HEK293 (cell line): ENCODE measurements at regions of chr19 and their contacts with region 1.

Region 1: DNA sequence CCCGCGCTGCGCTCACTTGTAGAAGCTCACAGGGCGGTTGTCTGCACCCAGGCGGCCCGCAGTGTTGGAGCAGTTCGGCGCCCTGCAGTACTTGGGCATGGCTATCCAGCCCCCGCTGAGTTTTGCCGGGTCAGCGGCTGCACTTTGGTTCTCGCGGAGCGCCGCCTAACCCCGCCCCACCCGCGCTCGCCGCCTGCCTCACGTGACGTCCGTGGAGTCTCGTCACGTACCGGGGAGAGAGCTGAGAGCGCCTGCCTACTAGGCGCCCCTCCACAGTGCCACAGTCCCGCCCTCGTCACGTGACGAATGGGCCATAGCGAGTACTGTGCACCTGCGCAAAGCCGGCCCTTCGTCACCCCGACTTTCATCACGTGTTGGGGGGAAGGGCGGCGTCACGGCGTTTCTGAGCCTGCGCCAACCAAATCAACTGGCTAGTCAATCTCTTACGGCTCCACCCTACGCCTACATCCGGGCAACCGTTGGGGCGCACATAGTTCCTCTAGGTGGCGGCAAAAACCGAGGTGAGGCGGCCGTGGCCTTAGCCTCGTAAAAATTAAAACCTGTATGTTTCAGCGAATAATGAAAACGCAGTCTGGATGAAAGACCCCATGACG is at the start of gene THAP8:
- H3K4me3 ChIP-seq: peak within 1 kb of the TSS; percentile 58
- H3K27ac ChIP-seq: peak within 1 kb of the TSS; percentile 93
- H3K4me1 ChIP-seq: peaks cover 38% of the 10 kb centered on the region
- CTCF ChIP-seq: peak; percentile 92

Region 2: DNA sequence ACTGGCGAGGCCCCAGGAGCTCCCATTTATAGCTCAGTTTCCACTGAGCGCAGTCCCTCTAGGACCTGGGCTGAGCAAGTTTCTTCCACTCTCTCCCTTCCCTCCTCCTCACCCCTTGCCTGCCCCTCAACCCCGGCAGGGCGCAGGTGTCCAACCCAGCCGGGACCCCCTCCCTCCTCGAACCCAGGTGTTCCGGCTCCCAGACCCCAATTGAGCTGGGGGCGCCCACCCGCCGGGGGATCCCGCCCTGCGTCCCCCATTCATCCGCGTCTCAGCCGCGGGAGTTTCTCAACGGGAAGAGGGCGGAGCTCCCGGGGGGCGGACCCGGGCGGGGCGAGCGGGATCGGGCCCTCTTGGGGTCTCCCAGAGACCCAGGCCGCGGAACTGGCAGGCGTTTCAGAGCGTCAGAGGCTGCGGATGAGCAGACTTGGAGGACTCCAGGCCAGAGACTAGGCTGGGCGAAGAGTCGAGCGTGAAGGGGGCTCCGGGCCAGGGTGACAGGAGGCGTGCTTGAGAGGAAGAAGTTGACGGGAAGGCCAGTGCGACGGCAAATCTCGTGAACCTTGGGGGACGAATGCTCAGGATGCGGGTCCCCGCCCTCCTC is 197.6 kb before region 1 on chr19 and contains the start of gene KIRREL2:
- CTCF ChIA-PET with region 1: no interaction called
- POLR2A ChIA-PET with region 1: interaction called, 11 read pairs
- H3K4me3 ChIP-seq: no peak within 1 kb of the TSS
- H3K27ac ChIP-seq: no peak within 1 kb of the TSS
- H3K4me1 ChIP-seq: no peaks in the 10 kb centered on the region
- CTCF ChIP-seq: no peak

Region 3: DNA sequence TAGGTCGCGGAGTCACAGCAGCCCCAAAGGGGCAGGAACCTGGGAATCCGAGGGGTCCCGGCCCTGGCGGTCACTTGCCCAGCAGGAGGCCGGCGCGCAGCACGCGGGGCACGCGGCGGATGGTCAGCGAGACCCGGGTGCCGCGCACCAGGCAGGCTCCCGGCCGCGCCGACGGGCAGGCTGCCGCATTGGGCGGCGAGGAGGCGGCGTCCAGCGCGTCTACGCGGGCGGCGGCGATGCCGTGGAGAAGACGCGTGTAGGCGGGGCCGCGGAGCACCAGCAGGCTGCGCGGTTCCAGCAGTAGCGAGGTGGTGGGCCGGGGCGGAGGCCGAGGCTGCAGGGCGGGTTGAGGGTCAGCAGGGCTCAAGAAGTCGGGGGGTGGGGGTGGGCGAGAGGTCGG is 45.0 kb before region 1 on chr19:
- CTCF ChIA-PET with region 1: interaction called, 6 read pairs
- POLR2A ChIA-PET with region 1: interaction called, 26 read pairs
- H3K4me3 ChIP-seq: no peak overlapping the region
- H3K27ac ChIP-seq: no peak overlapping the region
- H3K4me1 ChIP-seq: peaks cover 12% of the 10 kb centered on the region
- CTCF ChIP-seq: no peak

Region 4: GRCh38 chr19:36041831-36042230 is 12.4 kb before region 1 on chr19:
- CTCF ChIA-PET with region 1: interaction called, 6 read pairs
- POLR2A ChIA-PET with region 1: interaction called, 19 read pairs
- H3K4me3 ChIP-seq: no peak overlapping the region
- H3K27ac ChIP-seq: no peak overlapping the region
- H3K4me1 ChIP-seq: peaks cover 2% of the 10 kb centered on the region; the same call in 1 of the 2 replicates
- CTCF ChIP-seq: no peak

Region 5: DNA sequence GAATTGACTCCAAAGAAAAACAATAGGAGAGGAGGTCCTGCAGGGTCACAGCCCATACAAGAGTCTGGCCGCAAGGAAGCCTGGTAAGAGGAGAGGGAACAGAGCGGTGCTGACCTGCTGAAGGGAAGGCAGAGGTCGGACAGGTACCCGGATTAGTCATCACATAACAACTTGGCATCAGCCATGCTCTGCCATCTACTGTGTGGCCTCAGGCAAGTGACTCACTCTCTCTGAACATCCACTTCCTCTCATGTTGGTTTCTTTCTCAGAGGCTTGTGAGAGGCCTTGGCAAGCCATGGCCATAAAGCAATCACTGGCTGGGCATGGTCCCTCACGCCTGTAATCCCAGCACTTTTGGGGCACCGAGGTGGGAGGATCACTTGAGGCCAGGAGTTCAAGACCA is 78.3 kb after region 1 on chr19:
- CTCF ChIA-PET with region 1: interaction called, 61 read pairs
- POLR2A ChIA-PET with region 1: interaction called, 15 read pairs
- H3K4me3 ChIP-seq: no peak overlapping the region
- H3K27ac ChIP-seq: no peak overlapping the region
- H3K4me1 ChIP-seq: peaks cover 12% of the 10 kb centered on the region
- CTCF ChIP-seq: no peak